B cell (primary cell): ENCODE measurements at regions of chr19 and their contacts with region 1.

Region 1: GRCh38 chr19:1103708-1104310 is at the start of gene GPX4:
- DNase-seq: peak; percentile 100
- ATAC-seq: peak; percentile 86
- H3K4me3 ChIP-seq: peak within 1 kb of the TSS; percentile 42 to 90 (median 80)
- H3K4me3 Mint-ChIP-seq: peak within 1 kb of the TSS; percentile 81
- H3K27ac ChIP-seq: peak within 1 kb of the TSS; percentile 88 to 100
- H3K27ac Mint-ChIP-seq: peak within 1 kb of the TSS; percentile 94
- H3K4me1 ChIP-seq: peaks cover 26 to 58% of the 10 kb centered on the region in 2 donors
- H3K4me1 Mint-ChIP-seq: peaks cover 38% of the 10 kb centered on the region
- H3K27me3 ChIP-seq: no peaks in the 10 kb centered on the region
- H3K27me3 Mint-ChIP-seq: no peaks in the 10 kb centered on the region
- CTCF ChIP-seq: no peak
- total RNA-seq, gene GPX4: 202 and 213 TPM in 2 replicates

Region 2: DNA sequence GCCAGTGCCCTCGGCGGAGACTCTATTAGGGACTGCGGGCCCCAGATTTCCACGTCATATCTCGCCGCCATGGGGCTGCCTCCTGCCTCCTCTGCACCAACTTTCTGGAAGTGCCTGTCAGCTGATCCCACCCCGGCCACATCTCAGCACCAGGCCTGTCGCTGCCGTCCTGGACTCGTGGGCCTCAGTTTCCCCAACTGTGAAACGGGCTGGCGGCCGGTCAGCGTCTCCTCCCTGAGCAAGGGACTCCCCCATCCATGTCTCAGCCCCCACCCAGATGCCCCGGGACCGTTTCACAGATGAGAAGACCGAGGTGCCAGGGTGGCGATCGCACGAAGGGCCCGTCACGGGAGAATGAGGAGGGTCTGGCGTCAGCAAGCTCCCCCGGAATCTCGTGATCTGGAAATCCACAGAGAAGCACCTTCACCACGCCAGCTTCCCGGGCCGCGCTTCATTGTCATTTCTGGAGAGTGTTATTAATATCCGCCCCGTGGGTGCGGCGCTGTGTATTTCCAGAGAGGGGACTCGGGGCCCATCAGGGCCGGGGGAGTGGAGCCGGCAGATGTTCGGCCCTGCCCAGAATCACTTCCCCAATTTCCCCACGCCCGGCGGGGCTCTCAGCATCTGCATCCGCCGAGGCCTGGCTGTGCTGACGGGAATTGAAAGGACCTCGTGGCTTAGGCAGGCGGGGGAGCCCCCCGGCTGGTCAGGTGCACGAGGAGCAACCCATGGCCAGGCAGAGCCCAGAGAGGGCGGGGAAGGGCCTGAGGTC is 156.4 kb before region 1 on chr19:
- CTCF ChIA-PET with region 1: no interaction called
- POLR2A ChIA-PET with region 1: no interaction called
- intact Hi-C with region 1: no loop called
- DNase-seq: peak; percentile 97
- ATAC-seq: peak; percentile 81
- H3K4me3 ChIP-seq: peak overlapping the region in 4 of 5 experiments; percentile 23 to 41 (median 33)
- H3K4me3 Mint-ChIP-seq: peak overlapping the region; percentile 79
- H3K27ac ChIP-seq: peak overlapping the region; percentile 85 to 95
- H3K27ac Mint-ChIP-seq: peak overlapping the region; percentile 95
- H3K4me1 ChIP-seq: peaks cover 27 to 53% of the 10 kb centered on the region in 2 donors
- H3K4me1 Mint-ChIP-seq: peaks cover 50% of the 10 kb centered on the region
- H3K27me3 ChIP-seq: no peaks in the 10 kb centered on the region
- H3K27me3 Mint-ChIP-seq: no peaks in the 10 kb centered on the region
- CTCF ChIP-seq: no peak

Region 3: GRCh38 chr19:1064661-1065605 is 38.9 kb before region 1 on chr19:
- CTCF ChIA-PET with region 1: interaction called, 6 read pairs
- POLR2A ChIA-PET with region 1: interaction called, 14 read pairs
- intact Hi-C with region 1: loop called (anchors 5 kb)
- DNase-seq: peak; percentile 83
- ATAC-seq: peak; percentile 19
- H3K4me3 ChIP-seq: no peak overlapping the region
- H3K4me3 Mint-ChIP-seq: peak overlapping the region; percentile 79
- H3K27ac ChIP-seq: no peak overlapping the region
- H3K27ac Mint-ChIP-seq: peak overlapping the region; percentile 83
- H3K4me1 ChIP-seq: peaks cover 38 to 53% of the 10 kb centered on the region in 2 donors
- H3K4me1 Mint-ChIP-seq: peaks cover 33% of the 10 kb centered on the region
- H3K27me3 ChIP-seq: no peaks in the 10 kb centered on the region
- H3K27me3 Mint-ChIP-seq: no peaks in the 10 kb centered on the region
- CTCF ChIP-seq: peak; percentile 78

Region 4: GRCh38 chr19:1087813-1088415 is 15.9 kb before region 1 on chr19:
- CTCF ChIA-PET with region 1: interaction called, 3 read pairs
- POLR2A ChIA-PET with region 1: interaction called, 21 read pairs
- intact Hi-C with region 1: no loop called
- DNase-seq: peak; percentile 86
- ATAC-seq: peak; percentile 61
- H3K4me3 ChIP-seq: peak overlapping the region in 2 of 5 experiments; percentile 1 to 8
- H3K4me3 Mint-ChIP-seq: peak overlapping the region; percentile 69
- H3K27ac ChIP-seq: peak overlapping the region; percentile 29 to 82
- H3K27ac Mint-ChIP-seq: peak overlapping the region; percentile 91
- H3K4me1 ChIP-seq: peaks cover 34 to 42% of the 10 kb centered on the region in 2 donors
- H3K4me1 Mint-ChIP-seq: peaks cover 35% of the 10 kb centered on the region
- H3K27me3 ChIP-seq: no peaks in the 10 kb centered on the region
- H3K27me3 Mint-ChIP-seq: no peaks in the 10 kb centered on the region
- CTCF ChIP-seq: peak; percentile 15

Region 5: GRCh38 chr19:1205114-1206062 is 101.6 kb after region 1 on chr19 and contains the start of gene STK11:
- CTCF ChIA-PET with region 1: no interaction called
- POLR2A ChIA-PET with region 1: interaction called, 10 read pairs
- intact Hi-C with region 1: loop called (anchors 1 kb)
- DNase-seq: peak; percentile 99
- ATAC-seq: peak; percentile 92
- H3K4me3 ChIP-seq: peak within 1 kb of the TSS; percentile 51 to 77 (median 63)
- H3K4me3 Mint-ChIP-seq: peak within 1 kb of the TSS; percentile 94
- H3K27ac ChIP-seq: peak within 1 kb of the TSS; percentile 43 to 65
- H3K27ac Mint-ChIP-seq: peak within 1 kb of the TSS; percentile 92
- H3K4me1 ChIP-seq: peaks cover 16 to 32% of the 10 kb centered on the region in 2 donors
- H3K4me1 Mint-ChIP-seq: peaks cover 25% of the 10 kb centered on the region
- H3K27me3 ChIP-seq: no peaks in the 10 kb centered on the region
- H3K27me3 Mint-ChIP-seq: no peaks in the 10 kb centered on the region
- CTCF ChIP-seq: no peak
- total RNA-seq, gene STK11: 89.9 and 91.8 TPM in 2 replicates